Endothelial cell of umbilical vein (primary cell): ENCODE measurements at regions of chrX and their contacts with region 1.

Region 1: DNA sequence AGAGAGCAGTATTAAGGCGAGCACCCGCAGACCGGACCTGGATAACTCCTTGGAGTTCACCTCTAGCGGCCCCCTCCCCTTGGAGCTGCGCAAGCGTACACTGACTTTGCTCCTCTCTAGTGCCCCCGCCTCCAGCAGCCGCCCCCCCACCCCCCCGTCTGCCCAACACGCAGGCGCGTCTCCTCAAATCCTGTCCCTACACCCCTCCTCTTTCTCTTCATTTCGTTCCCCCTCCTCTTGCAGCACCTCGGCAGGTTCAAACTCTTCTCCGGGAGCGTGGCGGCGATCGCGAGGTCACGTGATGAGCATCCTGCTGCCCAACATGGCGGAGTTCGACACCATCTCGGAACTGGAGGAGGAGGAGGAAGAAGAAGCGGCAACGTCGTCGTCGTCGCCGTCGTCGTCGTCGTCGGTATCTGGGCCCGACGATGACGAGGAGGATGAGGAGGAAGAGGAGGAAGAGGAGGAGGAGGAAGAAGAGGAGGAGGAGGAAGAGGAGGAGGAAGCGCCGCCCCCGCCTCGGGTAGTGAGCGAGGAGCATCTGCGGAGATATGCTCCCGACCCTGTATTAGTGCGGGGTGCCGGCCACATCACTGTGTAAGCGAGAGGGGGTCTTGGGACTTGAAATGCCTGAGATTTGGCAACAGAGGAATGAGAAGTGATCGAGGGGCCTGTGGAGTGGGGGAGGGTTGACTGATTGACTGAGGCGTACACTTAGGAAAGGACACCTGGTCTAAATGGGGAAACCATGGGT is at the start of gene CHIC1:
- DNase-seq: peak; percentile 65
- H3K4me3 ChIP-seq: peak within 1 kb of the TSS; percentile 87 to 93 (median 91)
- H3K27ac ChIP-seq: peak within 1 kb of the TSS; percentile 71
- H3K4me1 ChIP-seq: peaks cover 13% of the 10 kb centered on the region
- H3K27me3 ChIP-seq: no peaks in the 10 kb centered on the region
- CTCF ChIP-seq: no peak
- POLR2A ChIP-seq: no peak
- total RNA-seq, gene CHIC1: 6.1 and 7.5 TPM in 2 replicates

Region 2: GRCh38 chrX:73577368-73577767 is 14.2 kb after region 1 on chrX:
- CTCF ChIA-PET with region 1: interaction called, 5 read pairs
- POLR2A ChIA-PET with region 1: no interaction called
- dilution Hi-C with region 1: no loop called
- intact Hi-C with region 1: loop called (anchors 1 kb)
- DNase-seq: peak; percentile 84
- H3K4me3 ChIP-seq: no peak overlapping the region
- H3K27ac ChIP-seq: peak overlapping the region; percentile 69
- H3K4me1 ChIP-seq: peaks cover 12% of the 10 kb centered on the region
- H3K27me3 ChIP-seq: no peaks in the 10 kb centered on the region
- CTCF ChIP-seq: no peak
- POLR2A ChIP-seq: no peak